Activated naive CD4-positive, alpha-beta T cell treated with anti-CD3 and anti-CD28 coated beads for 36 hours (primary cell): ENCODE measurements at regions of chr2 and their contacts with region 1.

Region 1: GRCh38 chr2:55419679-55420438 is at the start of gene CCDC88A:
- DNase-seq: peak; percentile 89
- H3K4me3 Mint-ChIP-seq: peak within 1 kb of the TSS; percentile 86
- H3K27ac Mint-ChIP-seq: peak within 1 kb of the TSS; percentile 53
- H3K4me1 Mint-ChIP-seq: peaks cover 18% of the 10 kb centered on the region
- H3K27me3 Mint-ChIP-seq: peaks cover 10% of the 10 kb centered on the region
- total RNA-seq, gene CCDC88A: 9.7 to 10.7 TPM

Region 2: DNA sequence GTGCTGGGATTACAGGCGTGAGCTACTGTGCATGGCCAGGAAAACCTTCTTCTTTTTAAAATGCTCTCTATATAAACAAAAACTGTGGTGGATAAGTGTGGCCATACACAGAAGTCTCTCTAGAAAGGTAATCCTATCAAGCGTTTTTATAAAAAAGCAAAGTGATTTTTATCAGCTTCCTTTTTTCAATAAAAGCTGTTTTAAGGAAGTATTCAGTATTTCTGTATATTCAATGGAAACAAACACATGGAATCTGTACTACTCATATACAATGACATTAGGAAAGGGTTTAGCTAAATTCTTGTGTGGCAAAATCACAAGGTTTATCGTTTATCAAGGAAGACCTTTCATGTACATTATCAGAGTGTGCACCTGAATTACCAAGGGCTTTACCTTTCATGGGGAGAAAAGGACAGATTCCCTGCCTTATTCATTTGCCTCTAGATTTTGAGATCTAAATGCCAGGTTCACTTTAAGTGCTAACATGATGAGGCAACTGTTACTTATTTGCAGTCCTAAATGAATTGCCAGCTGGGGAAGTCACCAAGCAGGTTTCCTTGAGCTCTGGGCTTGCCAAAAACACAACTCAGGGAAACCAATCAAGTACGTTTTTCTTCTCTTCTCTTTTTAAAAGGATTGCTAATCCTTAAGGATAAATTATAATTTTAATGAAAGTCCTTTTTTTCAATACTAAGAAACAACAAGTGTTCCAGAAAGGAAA is 440.4 kb before region 1 on chr2:
- CTCF ChIA-PET with region 1: no interaction called
- intact Hi-C with region 1: no loop called
- DNase-seq: no peak
- H3K4me3 Mint-ChIP-seq: no peak overlapping the region
- H3K27ac Mint-ChIP-seq: no peak overlapping the region
- H3K4me1 Mint-ChIP-seq: peaks cover 41% of the 10 kb centered on the region
- H3K27me3 Mint-ChIP-seq: no peaks in the 10 kb centered on the region

Region 3: DNA sequence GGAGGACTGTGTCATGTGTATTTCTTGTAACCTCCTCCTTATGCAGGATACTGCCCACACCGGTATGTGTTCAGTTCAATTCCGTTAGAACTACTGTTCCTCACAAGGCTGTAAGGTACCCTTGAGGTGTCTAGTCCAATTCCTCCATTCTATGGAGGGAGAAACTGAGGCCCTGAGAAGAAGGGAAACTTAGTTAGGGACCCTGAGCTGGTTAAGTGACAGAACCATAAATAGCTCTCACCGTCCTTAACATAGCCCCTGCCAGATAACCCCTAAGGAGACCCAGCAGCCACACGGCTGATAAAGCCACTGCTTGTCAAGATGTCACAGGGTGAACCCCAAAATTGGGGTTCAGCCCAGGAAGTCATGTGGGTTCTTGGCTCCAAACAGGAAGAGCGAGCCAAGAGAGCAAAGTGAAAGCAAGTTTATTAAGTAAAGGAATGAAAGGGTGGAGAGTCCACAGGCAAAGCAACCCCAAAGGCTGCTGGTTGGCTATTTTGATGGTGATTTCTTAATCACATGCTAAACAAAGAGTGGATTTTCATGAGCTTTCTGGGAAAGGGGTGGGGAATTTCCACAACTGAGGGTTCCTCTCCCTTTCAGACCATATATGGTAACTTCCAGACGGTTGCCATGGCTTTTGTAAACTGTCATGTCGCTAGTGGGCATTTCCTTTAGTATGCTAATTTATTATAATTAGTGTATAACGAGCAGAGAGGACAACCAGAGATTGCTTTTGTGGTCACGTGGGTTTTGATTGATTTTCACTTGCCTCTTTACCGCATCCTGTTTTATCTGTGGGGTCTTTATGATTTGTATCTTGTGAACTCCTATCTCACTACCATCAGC is 286.2 kb before region 1 on chr2:
- CTCF ChIA-PET with region 1: no interaction called
- intact Hi-C with region 1: loop called (anchors 5 kb)
- DNase-seq: peak; percentile 80
- H3K4me3 Mint-ChIP-seq: peak overlapping the region; percentile 75
- H3K27ac Mint-ChIP-seq: peak overlapping the region; percentile 95
- H3K4me1 Mint-ChIP-seq: peaks cover 25% of the 10 kb centered on the region
- H3K27me3 Mint-ChIP-seq: no peaks in the 10 kb centered on the region

Region 4: GRCh38 chr2:55223958-55224760 is 195.7 kb before region 1 on chr2:
- CTCF ChIA-PET with region 1: no interaction called
- intact Hi-C with region 1: loop called (anchors 1 kb)
- DNase-seq: no peak
- H3K4me3 Mint-ChIP-seq: peak overlapping the region; percentile 71
- H3K27ac Mint-ChIP-seq: peak overlapping the region; percentile 68
- H3K4me1 Mint-ChIP-seq: peaks cover 36% of the 10 kb centered on the region
- H3K27me3 Mint-ChIP-seq: no peaks in the 10 kb centered on the region

Region 5: DNA sequence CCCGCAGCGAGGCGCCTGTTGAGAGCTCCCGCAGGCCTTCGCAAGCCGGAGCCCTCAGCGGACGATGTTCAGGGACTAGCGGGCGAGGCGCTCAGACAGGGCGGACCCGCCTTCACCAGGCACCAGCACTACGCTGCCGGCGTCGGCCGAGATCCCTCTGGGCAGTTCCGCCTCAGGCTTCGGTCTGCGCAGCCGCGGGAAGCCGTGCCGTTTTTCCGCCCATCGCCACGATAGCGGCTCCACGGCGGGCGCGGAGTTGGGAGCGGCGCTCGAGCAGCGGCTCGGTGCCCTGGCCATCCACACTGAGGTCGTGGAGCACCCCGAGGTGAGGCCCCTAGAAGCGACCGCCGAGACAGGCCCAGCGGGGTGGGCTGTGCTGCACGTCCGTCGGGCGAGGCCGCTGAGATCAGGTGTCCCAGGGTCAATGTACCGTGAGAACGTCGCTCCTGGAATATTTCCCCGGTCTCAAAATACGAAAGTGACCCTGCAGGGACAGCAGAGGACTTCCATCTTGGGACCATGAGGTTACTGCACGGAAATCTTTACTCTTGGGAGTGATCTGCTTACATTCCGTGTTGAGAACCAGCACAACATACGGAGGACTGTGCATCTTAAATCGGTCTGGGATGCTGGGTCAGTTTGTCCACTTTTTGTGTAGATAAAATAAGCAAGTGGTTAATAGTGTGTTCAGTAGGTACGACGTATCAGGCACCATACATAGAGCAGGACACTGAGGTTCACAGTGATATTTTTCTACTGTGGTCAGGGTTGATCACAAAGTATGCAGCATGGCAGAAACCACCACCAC is 137.5 kb before region 1 on chr2:
- CTCF ChIA-PET with region 1: interaction called, 4 read pairs
- intact Hi-C with region 1: loop called (anchors 1 kb)
- DNase-seq: peak; percentile 85
- H3K4me3 Mint-ChIP-seq: peak overlapping the region; percentile 84
- H3K27ac Mint-ChIP-seq: peak overlapping the region; percentile 85
- H3K4me1 Mint-ChIP-seq: peaks cover 22% of the 10 kb centered on the region
- H3K27me3 Mint-ChIP-seq: no peaks in the 10 kb centered on the region

Region 6: GRCh38 chr2:55311444-55311870 is 108.4 kb before region 1 on chr2:
- CTCF ChIA-PET with region 1: no interaction called
- intact Hi-C with region 1: loop called (anchors 1 kb)
- DNase-seq: peak; percentile 63
- H3K4me3 Mint-ChIP-seq: no peak overlapping the region
- H3K27ac Mint-ChIP-seq: peak overlapping the region; percentile 57
- H3K4me1 Mint-ChIP-seq: peaks cover 25% of the 10 kb centered on the region
- H3K27me3 Mint-ChIP-seq: no peaks in the 10 kb centered on the region

Region 7: GRCh38 chr2:55478610-55479304 is 58.9 kb after region 1 on chr2:
- CTCF ChIA-PET with region 1: no interaction called
- intact Hi-C with region 1: no loop called
- DNase-seq: no peak
- H3K4me3 Mint-ChIP-seq: no peak overlapping the region
- H3K27ac Mint-ChIP-seq: no peak overlapping the region
- H3K4me1 Mint-ChIP-seq: no peaks in the 10 kb centered on the region
- H3K27me3 Mint-ChIP-seq: no peaks in the 10 kb centered on the region

Region 8: DNA sequence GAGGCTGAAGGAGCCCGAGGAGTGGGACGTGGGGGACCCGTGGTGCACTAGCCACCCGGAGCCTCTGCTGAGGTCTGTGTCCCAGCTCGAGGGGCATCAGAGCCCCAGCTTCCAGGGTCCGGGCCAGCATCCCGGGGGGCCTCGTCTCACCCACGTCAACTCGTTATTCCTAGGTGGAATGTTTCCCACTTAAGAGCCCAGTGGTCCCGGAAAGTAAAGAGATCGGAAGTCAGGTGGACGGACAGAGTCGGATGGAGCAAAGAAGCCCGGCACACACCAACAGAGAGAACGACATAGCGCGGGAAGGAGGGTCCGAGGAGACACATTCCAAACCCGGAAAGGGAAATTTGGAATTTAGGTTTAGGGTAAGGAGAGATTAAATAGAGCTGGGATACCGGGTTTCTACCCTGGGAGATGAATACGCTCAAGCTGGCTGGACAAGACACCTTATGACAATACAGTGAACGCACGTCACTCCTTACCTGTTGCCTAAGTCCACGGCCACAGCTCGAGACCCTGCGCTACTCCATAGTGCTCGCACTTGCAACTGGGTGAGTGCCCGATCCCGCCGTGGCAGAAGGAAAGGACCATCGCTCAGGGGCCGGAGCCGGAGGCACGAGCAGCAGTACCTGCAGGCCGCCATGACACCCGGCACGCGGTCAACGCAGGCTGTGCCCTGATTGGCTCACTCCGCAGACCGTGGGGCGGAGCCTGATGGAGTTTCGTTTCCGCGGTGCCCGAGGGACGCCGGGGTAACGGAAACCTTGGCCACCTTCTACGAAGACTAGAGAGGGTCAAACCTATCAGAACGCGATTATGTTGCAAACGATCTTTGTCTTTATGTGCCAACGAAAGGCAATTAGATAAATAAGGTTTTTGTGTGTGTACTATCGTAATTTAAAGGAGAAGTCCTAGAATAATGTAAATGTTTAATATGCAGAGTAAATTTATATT is 273.6 kb after region 1 on chr2 and contains the start of gene PNPT1:
- CTCF ChIA-PET with region 1: no interaction called
- intact Hi-C with region 1: loop called (anchors 1 kb)
- DNase-seq: peak; percentile 96
- H3K4me3 Mint-ChIP-seq: peak within 1 kb of the TSS; percentile 92
- H3K27ac Mint-ChIP-seq: peak within 1 kb of the TSS; percentile 86
- H3K4me1 Mint-ChIP-seq: peaks cover 34% of the 10 kb centered on the region
- H3K27me3 Mint-ChIP-seq: no peaks in the 10 kb centered on the region
- total RNA-seq, gene PNPT1: 54.1 to 60.7 TPM